Calu3 (cell line): ENCODE measurements at regions of chr2 and their contacts with region 1.

Region 1: DNA sequence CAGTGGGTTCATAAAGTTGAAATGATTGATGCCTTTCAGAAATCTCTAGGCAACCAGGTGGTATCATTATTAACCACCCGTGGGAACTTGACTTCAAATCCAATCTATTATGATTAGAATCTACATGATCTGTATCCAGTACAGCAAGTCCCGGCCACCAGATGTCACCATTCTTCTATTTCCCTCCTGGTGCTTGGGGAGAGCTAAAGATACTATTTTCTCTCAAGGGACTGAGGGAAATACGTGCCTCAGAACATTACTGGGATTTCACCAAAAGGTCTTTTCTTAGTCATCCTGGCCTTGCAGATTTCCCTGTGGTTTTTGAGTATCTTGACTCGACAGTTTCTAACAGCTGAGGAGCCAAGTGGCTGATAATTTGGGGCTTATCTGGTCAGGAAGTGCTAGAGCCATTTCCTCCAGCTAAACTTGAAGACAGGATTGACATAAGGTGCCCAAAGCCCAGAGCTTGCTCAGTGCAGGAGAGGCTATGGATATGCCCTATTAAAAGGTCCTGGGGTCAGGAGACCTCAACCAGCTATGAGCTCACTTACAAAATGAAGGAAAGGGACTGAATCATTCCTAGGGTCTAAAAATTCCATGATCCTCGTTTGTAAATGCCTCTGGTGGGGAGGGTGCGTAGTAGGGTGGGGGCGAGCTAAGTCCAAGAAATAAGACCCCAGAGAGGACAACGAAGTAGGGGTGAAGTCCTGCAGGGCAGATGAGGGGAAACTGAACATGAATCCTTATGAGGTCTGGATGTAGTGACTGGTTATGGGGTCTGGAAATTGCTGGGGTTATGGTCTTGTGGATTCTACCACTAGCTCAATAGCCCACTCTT is 135.4 kb upstream of the MGAT5 start:
- DNase-seq: peak; percentile 85
- H3K4me3 Mint-ChIP-seq: peak overlapping the region; percentile 70
- H3K27ac Mint-ChIP-seq: peak overlapping the region; percentile 52
- H3K4me1 Mint-ChIP-seq: peaks cover 23% of the 10 kb centered on the region
- H3K27me3 Mint-ChIP-seq: no peaks in the 10 kb centered on the region
- CTCF ChIP-seq: peak; percentile 77

Region 2: DNA sequence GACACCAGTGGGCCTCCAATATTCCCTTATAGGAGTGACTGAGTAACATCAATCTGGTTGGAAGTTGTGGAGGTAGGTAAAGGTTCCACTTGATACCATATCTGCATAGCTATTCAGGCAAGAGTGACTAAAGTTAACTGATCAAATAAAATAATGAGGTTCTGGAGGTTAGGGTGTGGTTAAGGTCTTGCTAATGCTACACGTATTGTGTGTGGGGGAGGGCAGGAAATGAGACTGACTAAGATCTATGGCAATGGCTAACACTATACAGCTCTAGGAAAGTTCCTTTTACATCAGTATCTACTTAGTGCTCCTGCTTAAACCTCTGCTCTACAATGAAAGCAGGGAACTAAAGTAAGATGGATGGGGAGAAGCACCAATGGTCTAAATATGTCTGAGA is 13.7 kb before region 1 on chr2:
- CTCF ChIA-PET with region 1: no interaction called
- intact Hi-C with region 1: no loop called
- DNase-seq: no peak
- H3K4me3 Mint-ChIP-seq: no peak overlapping the region
- H3K27ac Mint-ChIP-seq: no peak overlapping the region
- H3K4me1 Mint-ChIP-seq: peaks cover 16% of the 10 kb centered on the region
- H3K27me3 Mint-ChIP-seq: no peaks in the 10 kb centered on the region
- CTCF ChIP-seq: no peak

Region 3: GRCh38 chr2:134137182-134137611 is 18.7 kb after region 1 on chr2:
- CTCF ChIA-PET with region 1: interaction called, 9 read pairs
- intact Hi-C with region 1: loop called (anchors 2 kb)
- DNase-seq: peak; percentile 83
- H3K4me3 Mint-ChIP-seq: peak overlapping the region; percentile 48
- H3K27ac Mint-ChIP-seq: peak overlapping the region; percentile 89
- H3K4me1 Mint-ChIP-seq: peaks cover 77% of the 10 kb centered on the region
- H3K27me3 Mint-ChIP-seq: no peaks in the 10 kb centered on the region
- CTCF ChIP-seq: no peak

Region 4: GRCh38 chr2:134216152-134216829 is 97.8 kb after region 1 on chr2:
- CTCF ChIA-PET with region 1: interaction called, 13 read pairs
- intact Hi-C with region 1: no loop called
- DNase-seq: peak; percentile 58
- H3K4me3 Mint-ChIP-seq: peak overlapping the region; percentile 33
- H3K27ac Mint-ChIP-seq: peak overlapping the region; percentile 81
- H3K4me1 Mint-ChIP-seq: peaks cover 63% of the 10 kb centered on the region
- H3K27me3 Mint-ChIP-seq: no peaks in the 10 kb centered on the region
- CTCF ChIP-seq: no peak

Region 5: GRCh38 chr2:134245340-134245984 is 127.0 kb after region 1 on chr2:
- CTCF ChIA-PET with region 1: interaction called, 23 read pairs
- intact Hi-C with region 1: loop called (anchors 1 kb)
- DNase-seq: peak; percentile 86
- H3K4me3 Mint-ChIP-seq: no peak overlapping the region
- H3K27ac Mint-ChIP-seq: peak overlapping the region; percentile 79
- H3K4me1 Mint-ChIP-seq: peaks cover 43% of the 10 kb centered on the region
- H3K27me3 Mint-ChIP-seq: no peaks in the 10 kb centered on the region
- CTCF ChIP-seq: peak; percentile 75

Region 6: DNA sequence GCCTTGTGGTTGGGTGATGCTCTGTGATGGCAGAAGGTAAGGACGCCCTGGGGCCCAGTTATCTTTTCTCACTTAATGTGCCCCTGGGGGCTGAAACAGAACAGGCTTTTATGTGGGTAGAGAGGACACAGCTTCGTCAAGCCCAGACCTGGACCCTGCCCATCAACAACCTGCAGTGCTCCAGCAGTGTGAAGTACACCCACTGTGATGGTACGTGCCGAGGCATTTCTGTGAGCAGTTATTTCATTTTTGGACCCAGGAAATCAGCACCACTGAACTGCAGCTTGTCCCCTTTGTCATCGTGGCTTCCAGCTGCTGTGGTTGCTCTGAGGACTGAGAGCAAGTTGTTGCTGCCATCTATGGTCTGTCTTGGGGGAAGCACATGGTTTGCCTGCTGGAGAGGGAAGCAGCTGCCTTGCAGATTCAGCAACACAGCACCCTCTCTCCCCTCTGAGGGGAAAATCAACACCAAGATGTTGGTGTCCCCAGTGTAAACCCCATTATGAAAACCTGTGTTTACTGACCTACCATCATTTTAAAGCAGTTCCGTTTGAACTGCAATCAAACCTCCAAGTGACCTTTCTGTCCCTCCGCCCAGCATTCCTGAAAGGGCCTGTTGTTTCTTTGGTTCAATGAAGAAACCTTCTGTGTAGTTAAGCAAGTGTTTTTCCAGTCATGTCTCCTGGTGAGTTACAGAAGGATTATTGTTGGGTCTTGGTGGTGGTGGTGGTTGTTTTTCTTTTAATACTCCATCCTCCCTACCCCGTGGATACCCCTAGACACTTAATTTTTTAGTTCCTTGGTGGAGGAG is 293.5 kb after region 1 on chr2:
- CTCF ChIA-PET with region 1: interaction called, 20 read pairs
- intact Hi-C with region 1: loop called (anchors 1 kb)
- DNase-seq: peak; percentile 82
- H3K4me3 Mint-ChIP-seq: peak overlapping the region; percentile 60
- H3K27ac Mint-ChIP-seq: peak overlapping the region; percentile 88
- H3K4me1 Mint-ChIP-seq: peaks cover 97% of the 10 kb centered on the region
- H3K27me3 Mint-ChIP-seq: no peaks in the 10 kb centered on the region
- CTCF ChIP-seq: peak; percentile 52

Region 7: DNA sequence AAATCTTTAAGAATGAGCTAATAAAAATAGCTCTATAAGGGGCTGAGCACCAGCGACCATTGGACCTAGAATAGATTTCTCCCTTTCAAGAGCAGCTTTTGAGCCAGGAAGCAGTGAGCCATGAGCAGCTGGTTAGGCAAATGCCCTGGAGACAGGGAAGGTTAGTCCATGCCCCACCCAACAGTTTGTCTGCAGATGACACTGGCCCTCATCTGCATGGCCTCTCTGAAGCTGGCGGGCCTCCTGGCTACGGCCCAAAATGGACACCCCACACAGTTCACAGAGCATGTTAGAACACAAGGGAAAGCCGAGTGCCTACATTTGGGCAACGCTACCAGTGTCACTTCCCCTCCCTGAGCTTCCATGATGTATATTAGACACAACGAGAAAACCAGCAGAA is 336.4 kb after region 1 on chr2:
- CTCF ChIA-PET with region 1: interaction called, 14 read pairs
- intact Hi-C with region 1: loop called (anchors 1 kb)
- DNase-seq: no peak
- H3K4me3 Mint-ChIP-seq: no peak overlapping the region
- H3K27ac Mint-ChIP-seq: no peak overlapping the region
- H3K4me1 Mint-ChIP-seq: peaks cover 13% of the 10 kb centered on the region
- H3K27me3 Mint-ChIP-seq: no peaks in the 10 kb centered on the region
- CTCF ChIP-seq: no peak

Region 8: DNA sequence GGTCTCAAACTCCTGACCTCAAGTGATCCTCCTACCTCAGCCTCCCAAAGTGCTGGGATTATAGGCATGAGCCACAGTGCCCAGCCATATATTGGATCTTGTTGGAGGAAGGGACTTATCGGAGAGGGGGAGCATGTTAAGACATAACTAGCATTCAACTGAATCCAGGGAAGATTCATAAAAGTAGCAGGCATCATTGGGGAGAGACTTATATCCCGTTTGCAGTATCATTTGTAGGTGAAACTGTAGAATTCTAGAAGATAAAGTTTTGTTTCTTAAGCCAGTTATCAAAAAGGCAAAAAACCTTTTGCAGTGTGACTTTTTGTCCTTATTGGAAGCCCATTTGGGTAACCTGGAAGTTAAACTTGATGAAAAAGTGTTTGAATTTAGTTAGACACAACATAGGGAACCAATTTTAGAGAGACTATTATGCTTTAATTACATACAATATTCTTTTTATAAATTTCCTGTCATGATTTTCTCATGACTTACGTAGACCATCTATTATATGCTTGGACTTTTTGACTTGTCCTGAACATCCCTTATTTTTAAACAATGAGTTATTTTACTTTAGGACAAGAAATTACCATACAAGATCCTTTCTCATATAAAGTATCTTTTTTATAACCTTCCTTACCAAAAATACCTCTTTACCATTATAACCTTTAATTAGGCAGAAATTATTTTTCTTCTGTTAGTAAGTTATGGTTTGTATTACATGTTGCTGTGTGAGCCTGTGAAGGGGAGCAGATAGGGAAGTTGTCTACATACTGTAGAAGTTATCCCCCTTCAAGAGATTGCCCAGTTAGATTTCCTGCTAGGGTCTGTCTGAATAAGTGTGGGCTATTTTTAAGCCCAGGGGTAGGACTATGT is 953.9 kb after region 1 on chr2:
- CTCF ChIA-PET with region 1: no interaction called
- intact Hi-C with region 1: no loop called
- DNase-seq: no peak
- H3K4me3 Mint-ChIP-seq: no peak overlapping the region
- H3K27ac Mint-ChIP-seq: no peak overlapping the region
- H3K4me1 Mint-ChIP-seq: peaks cover 22% of the 10 kb centered on the region
- H3K27me3 Mint-ChIP-seq: no peaks in the 10 kb centered on the region
- CTCF ChIP-seq: no peak